AG04449 (cell line): ENCODE measurements at regions of chr3 and their contacts with region 1.

Region 1: GRCh38 chr3:71875461-71875947 is 90.6 kb upstream of the PROK2 start:
- DNase-seq: peak; percentile 2
- H3K4me3 ChIP-seq: no peak overlapping the region
- CTCF ChIP-seq: peak; percentile 95

Region 2: GRCh38 chr3:71672340-71672739 is 203.2 kb before region 1 on chr3:
- CTCF ChIA-PET with region 1: no interaction called
- POLR2A ChIA-PET with region 1: no interaction called
- DNase-seq: no peak
- H3K4me3 ChIP-seq: no peak overlapping the region
- CTCF ChIP-seq: no peak

Region 3: GRCh38 chr3:71893122-71893521 is 17.6 kb after region 1 on chr3:
- CTCF ChIA-PET with region 1: interaction called, 17 read pairs
- POLR2A ChIA-PET with region 1: no interaction called
- DNase-seq: no peak
- H3K4me3 ChIP-seq: no peak overlapping the region
- CTCF ChIP-seq: no peak

Region 4: DNA sequence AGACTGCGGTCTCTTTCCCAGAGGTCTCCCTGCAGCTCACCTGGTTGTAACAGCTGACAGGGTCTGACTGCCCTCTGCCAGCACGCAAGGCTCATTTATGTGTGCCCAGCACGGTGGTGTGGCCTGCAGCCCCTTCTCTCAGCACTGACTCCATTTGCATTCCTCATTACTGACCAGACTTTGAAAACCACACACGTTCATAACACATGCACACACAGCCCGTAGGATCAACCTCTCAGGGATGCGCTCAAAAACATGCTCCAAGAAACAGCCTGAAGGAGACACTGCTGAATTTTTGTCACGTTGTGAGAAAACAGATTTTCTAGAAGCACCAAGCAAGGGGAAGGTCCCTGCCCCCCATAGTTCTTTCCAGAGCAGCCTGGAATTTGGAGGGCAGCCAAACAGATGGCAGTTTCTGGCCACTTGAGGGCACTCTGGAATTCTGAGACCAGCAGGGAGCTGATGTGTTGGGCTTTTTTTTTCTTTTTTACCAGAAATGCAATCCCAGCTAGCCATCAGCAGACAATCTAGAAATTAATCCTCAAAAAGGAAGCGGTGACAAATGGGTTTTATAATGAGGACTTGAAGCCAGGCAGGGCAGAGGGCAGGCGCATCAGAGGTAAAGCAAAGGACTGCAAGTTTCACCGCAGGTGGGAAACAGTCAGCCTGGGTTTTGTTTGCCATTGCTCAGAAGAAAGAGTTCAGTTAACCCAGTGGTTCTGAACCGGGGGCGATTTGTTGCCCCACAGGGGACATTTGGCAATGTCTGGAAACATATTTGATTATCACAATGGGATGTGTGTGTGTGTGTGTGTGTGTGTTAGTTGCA is 80.0 kb after region 1 on chr3:
- CTCF ChIA-PET with region 1: interaction called, 16 read pairs
- POLR2A ChIA-PET with region 1: no interaction called
- DNase-seq: peak; percentile 47
- H3K4me3 ChIP-seq: no peak overlapping the region
- CTCF ChIP-seq: peak; percentile 76

Region 5: GRCh38 chr3:72618739-72619138 is 743.2 kb after region 1 on chr3:
- CTCF ChIA-PET with region 1: no interaction called
- POLR2A ChIA-PET with region 1: no interaction called
- DNase-seq: no peak
- H3K4me3 ChIP-seq: no peak overlapping the region
- CTCF ChIP-seq: no peak

Region 6: DNA sequence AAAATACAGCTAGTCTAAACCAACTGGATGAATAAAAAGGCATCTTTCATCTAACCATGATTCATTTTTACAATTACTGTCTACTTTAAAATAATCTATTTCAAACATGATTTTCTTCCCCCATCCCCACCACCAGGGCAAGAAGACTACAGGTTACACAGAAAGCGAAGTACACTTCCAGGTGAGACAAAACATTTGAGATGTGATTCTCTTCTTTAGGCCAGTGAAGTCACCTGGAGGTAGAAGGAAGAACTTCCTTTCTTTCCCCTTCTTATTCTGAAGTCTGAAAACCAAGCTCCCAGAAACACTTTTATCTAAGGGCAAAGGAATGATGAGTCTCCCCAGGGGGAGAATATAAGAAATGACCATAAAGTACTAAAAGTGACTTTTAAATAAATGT is 936.0 kb after region 1 on chr3:
- CTCF ChIA-PET with region 1: interaction called, 29 read pairs
- POLR2A ChIA-PET with region 1: no interaction called
- DNase-seq: no peak
- H3K4me3 ChIP-seq: no peak overlapping the region
- CTCF ChIP-seq: no peak